ENCODE measurements at regions of chr6 and their contacts with region 1.

Region 1: DNA sequence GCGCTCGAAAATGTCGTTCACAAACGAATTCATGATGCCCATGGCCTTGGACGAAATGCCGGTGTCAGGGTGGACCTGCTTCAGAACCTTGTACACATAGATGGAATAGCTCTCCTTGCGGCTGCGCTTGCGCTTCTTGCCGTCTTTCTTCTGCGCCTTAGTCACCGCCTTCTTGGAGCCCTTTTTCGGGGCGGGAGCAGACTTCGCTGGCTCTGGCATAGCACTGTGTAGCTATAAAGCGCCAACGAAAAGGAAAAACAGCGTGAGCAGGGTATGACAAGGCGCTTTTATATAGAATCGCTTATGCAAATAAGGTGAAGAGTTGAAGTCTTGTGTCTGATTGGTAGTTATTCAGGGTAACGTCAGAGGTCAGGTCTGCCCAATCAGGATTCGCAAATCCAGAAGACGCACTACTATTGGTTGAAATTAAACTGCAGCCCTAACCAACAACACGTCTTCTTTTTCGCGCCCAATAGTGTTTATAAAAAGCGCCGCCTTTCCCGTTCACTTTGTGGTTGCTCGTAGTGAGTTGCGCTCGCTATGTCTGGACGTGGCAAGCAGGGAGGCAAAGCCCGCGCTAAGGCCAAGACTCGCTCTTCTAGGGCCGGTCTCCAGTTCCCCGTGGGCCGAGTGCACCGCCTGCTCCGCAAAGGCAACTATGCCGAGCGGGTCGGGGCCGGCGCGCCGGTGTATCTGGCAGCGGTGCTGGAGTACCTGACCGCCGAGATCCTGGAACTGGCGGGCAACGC is 114.8 kb upstream of the PRSS16 start:
- DNase-seq: peak; percentile 93
- ATAC-seq: peak; percentile 80
- H3K4me3 Mint-ChIP-seq: no peak overlapping the region
- H3K27ac Mint-ChIP-seq: no peak overlapping the region
- H3K4me1 Mint-ChIP-seq: peaks cover 21% of the 10 kb centered on the region
- H3K27me3 Mint-ChIP-seq: no peaks in the 10 kb centered on the region

Region 2: GRCh38 chr6:26103770-26104456 is 1028.8 kb before region 1 on chr6:
- CTCF ChIA-PET with region 1: no interaction called
- POLR2A ChIA-PET with region 1: interaction called, 6 read pairs
- intact Hi-C with region 1: loop called in 1 of 2 experiments (anchors 5 kb)
- DNase-seq: peak; percentile 92
- ATAC-seq: peak; percentile 89
- H3K4me3 Mint-ChIP-seq: peak overlapping the region; percentile 82
- H3K27ac Mint-ChIP-seq: peak overlapping the region; percentile 97
- H3K4me1 Mint-ChIP-seq: peaks cover 16% of the 10 kb centered on the region
- H3K27me3 Mint-ChIP-seq: no peaks in the 10 kb centered on the region

Region 3: GRCh38 chr6:26234421-26235296 is 898.0 kb before region 1 on chr6:
- CTCF ChIA-PET with region 1: no interaction called
- POLR2A ChIA-PET with region 1: interaction called, 14 read pairs
- intact Hi-C with region 1: no loop called
- DNase-seq: peak; percentile 81
- ATAC-seq: peak; percentile 73
- H3K4me3 Mint-ChIP-seq: peak overlapping the region; percentile 77
- H3K27ac Mint-ChIP-seq: peak overlapping the region; percentile 100
- H3K4me1 Mint-ChIP-seq: peaks cover 31% of the 10 kb centered on the region
- H3K27me3 Mint-ChIP-seq: peaks cover 2% of the 10 kb centered on the region

Region 4: DNA sequence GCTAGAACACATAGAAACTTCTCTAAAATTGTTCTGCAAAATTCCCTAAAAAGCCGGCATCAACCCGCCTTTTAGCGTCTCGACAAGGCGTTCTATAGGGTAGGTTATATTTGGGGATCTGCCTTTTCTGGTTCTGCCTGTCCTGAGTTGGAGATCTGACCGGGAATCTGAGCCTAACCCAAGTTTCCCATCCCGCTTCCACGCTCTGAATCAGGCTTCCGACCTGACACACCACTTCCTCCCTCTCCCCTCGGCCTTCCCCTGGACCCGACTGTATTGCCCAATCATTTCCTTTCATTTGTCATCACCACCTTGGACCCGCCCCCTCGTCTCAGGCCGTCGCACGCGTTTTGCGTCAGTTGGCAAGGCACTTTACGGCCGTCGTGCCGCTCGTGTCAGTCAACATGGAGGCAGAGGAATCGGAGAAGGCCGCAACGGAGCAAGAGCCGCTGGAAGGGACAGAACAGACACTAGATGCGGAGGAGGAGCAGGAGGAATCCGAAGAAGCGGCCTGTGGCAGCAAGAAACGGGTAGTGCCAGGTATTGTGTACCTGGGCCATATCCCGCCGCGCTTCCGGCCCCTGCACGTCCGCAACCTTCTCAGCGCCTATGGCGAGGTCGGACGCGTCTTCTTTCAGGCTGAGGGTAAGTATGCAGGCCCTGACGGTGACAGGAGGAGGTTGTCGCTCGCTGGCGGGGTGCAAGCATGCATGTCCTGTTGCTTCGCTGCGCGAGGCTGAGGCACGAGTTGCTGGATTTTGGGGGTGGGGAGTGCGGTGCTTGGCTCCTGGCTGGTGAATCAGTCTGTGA is 535.9 kb before region 1 on chr6 and contains the start of gene ABT1:
- CTCF ChIA-PET with region 1: interaction called, 8 read pairs
- POLR2A ChIA-PET with region 1: interaction called, 5 read pairs
- intact Hi-C with region 1: loop called (anchors 5 kb)
- DNase-seq: peak; percentile 98
- ATAC-seq: peak; percentile 66
- H3K4me3 Mint-ChIP-seq: no peak within 1 kb of the TSS
- H3K27ac Mint-ChIP-seq: no peak within 1 kb of the TSS
- H3K4me1 Mint-ChIP-seq: peaks cover 41% of the 10 kb centered on the region
- H3K27me3 Mint-ChIP-seq: peaks cover 18% of the 10 kb centered on the region
- total RNA-seq, gene ABT1: 21.5 to 24.9 TPM

Region 5: GRCh38 chr6:27809939-27810767 is 677.4 kb after region 1 on chr6:
- CTCF ChIA-PET with region 1: interaction called, 3 read pairs
- POLR2A ChIA-PET with region 1: interaction called, 40 read pairs
- intact Hi-C with region 1: loop called (anchors 1 kb)
- DNase-seq: peak; percentile 83
- ATAC-seq: peak; percentile 33
- H3K4me3 Mint-ChIP-seq: peak overlapping the region; percentile 86
- H3K27ac Mint-ChIP-seq: peak overlapping the region; percentile 95
- H3K4me1 Mint-ChIP-seq: peaks cover 49% of the 10 kb centered on the region
- H3K27me3 Mint-ChIP-seq: no peaks in the 10 kb centered on the region

Region 6: DNA sequence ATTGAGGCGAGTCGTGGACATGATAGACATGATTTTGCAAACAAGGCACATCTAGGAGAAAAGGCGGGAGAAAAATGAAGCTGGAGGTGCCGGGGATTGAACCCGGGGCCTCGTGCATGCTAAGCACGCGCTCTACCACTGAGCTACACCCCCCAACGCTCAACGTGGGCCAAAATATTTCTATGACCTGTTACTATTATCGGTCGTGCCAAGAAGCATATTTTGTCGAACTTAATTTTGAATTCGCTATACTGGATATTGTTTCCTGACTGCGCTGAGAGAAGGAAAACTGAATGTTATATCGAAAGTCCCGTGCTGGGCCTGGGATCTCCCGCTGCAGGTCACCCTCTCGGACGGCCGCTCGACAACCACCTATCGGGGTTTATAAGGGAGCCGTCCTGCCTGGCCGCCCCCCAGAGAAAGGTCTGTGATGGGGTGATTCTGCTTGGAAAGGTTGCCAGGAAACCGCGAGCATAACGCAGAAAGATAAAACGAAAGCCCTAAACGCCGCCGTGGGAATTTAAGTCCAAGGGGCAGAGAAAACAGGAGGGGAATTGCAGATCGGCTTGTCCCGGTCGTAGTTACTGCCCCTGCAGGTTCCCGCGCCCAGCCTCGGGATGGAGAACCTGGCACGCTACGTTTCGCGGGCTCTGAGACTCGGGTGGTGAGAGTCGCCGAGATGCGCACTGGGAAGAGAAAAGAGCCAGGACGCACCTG is 1731.1 kb after region 1 on chr6:
- CTCF ChIA-PET with region 1: no interaction called
- POLR2A ChIA-PET with region 1: no interaction called
- intact Hi-C with region 1: loop called in 1 of 2 experiments (anchors 10 kb)
- DNase-seq: peak; percentile 88
- ATAC-seq: peak; percentile 45
- H3K4me3 Mint-ChIP-seq: peak overlapping the region; percentile 74
- H3K27ac Mint-ChIP-seq: peak overlapping the region; percentile 78
- H3K4me1 Mint-ChIP-seq: peaks cover 36% of the 10 kb centered on the region
- H3K27me3 Mint-ChIP-seq: peaks cover 1% of the 10 kb centered on the region